Ascending aorta (tissue), 2 donors: ENCODE measurements at regions of chr14 and their contacts with region 1.

Region 1: DNA sequence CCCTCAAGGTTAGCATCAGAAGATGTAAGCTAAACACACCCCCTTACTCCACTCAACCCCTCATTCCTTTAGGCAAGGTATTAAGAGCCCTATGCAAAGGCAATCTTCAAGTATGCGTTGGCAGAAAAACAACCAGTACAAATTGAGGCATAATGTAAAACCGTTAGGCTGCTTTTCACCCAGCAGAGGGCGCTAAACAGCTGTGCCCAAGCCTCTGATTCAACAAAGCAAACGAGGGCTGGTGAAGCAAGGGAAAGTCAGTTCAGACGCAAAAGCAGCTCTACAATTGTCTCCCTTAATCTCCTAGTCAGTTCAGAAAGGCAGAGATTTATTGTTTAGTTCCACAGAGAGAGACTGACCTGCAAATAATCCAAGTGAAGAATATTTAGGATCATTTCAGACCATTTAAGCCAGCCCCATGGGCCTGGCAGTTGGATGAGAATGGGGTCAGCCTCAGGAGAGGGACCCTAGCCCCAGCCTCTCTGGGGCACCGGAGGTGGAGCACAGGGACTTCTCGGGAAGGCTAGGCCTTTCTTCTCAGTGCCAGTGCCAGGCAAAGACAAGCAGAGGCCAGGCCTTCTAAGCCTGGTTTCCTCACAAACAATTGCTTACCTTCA is 23.5 kb downstream of the DCAF5 start:
- DNase-seq: peak in 1 of 2 donors; percentile 85
- H3K4me3 ChIP-seq: no peak overlapping the region
- H3K27ac ChIP-seq: peak overlapping the region in 1 of 2 donors; percentile 19
- H3K4me1 ChIP-seq: peaks cover 0 to 37% of the 10 kb centered on the region in 2 donors
- H3K27me3 ChIP-seq: no peaks in the 10 kb centered on the region
- CTCF ChIP-seq: peak; percentile 75 to 96 (median 94)

Region 2: GRCh38 chr14:69153131-69153872 is 23.9 kb after region 1 on chr14:
- intact Hi-C with region 1: loop called (anchors 1 kb)
- DNase-seq: peak; percentile 65 to 97
- H3K4me3 ChIP-seq: peak overlapping the region; percentile 78 to 92
- H3K27ac ChIP-seq: peak overlapping the region; percentile 97 to 98
- H3K4me1 ChIP-seq: peaks cover 0 to 6% of the 10 kb centered on the region in 2 donors
- H3K27me3 ChIP-seq: no peaks in the 10 kb centered on the region
- CTCF ChIP-seq: peak in 1 of 3 experiments; percentile 27

Region 3: DNA sequence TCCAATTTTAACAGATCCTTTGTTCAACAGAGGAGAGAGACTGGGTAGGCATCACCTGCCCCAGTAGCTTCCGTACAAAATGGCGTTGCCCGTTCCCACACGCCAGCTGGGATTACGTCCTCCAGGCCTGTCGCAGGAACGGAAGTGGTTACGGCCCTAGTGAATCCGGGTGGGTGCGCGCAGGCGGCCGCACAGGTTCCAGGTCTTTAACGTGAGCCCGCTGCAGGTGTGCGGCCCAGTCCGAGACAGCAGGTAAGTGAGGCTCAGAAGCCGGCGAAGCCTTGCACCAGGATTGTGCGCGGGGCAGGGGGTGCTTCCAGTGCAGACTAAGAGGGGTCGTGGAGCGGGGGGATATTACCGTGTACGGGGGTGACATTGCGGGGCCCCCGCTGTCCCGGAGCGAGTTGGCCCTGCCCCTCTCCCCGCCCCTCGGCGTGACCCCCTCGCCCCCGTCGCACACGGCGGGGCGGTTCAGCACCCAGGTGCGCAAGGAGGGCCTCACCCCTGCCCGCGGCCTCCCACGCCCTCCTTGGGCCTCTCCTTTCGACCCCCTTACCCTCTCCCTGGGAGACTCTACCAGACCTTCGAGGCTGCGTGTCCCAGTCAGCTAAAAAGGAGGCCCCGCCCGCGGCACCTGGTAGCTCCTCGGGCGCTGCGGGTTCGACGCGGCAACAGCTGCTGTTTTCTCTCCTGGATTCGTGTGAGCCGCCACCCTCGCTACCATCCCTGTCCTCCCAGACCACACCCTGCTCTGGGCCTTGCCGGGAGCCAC is 62.2 kb after region 1 on chr14 and contains the start of gene EXD2:
- intact Hi-C with region 1: loop called (anchors 1 kb)
- DNase-seq: peak; percentile 24 to 90
- H3K4me3 ChIP-seq: peak within 1 kb of the TSS; percentile 73 to 92
- H3K27ac ChIP-seq: peak within 1 kb of the TSS; percentile 37 to 39
- H3K4me1 ChIP-seq: no peaks in the 10 kb centered on the region
- H3K27me3 ChIP-seq: no peaks in the 10 kb centered on the region
- CTCF ChIP-seq: no peak
- total RNA-seq, gene EXD2: 17.2 TPM

Region 4: DNA sequence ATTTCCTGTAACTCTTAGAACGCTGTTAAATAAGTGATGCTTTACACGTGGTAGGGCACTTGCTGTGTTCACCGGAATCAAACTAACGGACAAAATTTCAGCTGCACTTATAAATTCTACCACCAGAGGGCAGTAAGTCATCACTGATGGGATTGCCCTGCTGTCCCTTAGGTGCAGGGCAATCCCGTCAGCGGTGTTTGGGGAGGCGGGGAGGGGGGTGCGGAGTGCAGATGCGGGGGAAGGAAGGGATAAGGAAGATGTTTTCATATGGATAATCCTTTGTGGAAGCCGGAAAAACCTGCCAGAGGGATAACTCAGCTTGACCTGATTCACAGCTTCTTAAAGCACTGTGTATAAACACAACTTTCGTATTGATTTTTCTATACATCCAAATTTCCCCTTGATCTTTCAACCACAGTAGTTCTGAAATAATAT is 689.4 kb after region 1 on chr14:
- intact Hi-C with region 1: no loop called
- DNase-seq: peak in 1 of 2 donors; percentile 67
- H3K4me3 ChIP-seq: no peak overlapping the region
- H3K27ac ChIP-seq: no peak overlapping the region
- H3K4me1 ChIP-seq: no peaks in the 10 kb centered on the region
- H3K27me3 ChIP-seq: no peaks in the 10 kb centered on the region
- CTCF ChIP-seq: peak; percentile 67 to 91 (median 72)